ENCODE measurements at regions of chr1 and their contacts with region 1.

Region 1: GRCh38 chr1:61202854-61203598 is 120.7 kb downstream of the NFIA start:
- DNase-seq: no peak
- H3K4me3 Mint-ChIP-seq: no peak overlapping the region
- H3K27ac Mint-ChIP-seq: no peak overlapping the region
- H3K4me1 Mint-ChIP-seq: no peaks in the 10 kb centered on the region
- H3K27me3 Mint-ChIP-seq: peaks cover 17% of the 10 kb centered on the region

Region 2: DNA sequence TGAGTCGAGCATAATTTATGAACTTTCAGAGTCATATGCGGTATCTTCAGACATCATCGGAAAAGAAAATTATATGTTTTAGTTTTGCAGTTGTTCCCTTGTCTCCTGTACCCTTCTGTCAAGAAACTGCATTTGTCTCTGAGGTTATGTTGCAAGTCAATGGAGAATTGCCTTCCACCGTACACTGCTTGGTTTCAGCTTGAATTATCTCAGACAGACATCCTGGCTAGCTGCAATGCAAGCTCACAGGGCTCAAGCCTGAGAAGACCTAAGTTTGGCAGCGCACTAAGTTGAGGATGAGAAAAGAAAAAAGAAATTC is 35.3 kb after region 1 on chr1:
- intact Hi-C with region 1: no loop called
- DNase-seq: no peak
- H3K4me3 Mint-ChIP-seq: no peak overlapping the region
- H3K27ac Mint-ChIP-seq: no peak overlapping the region
- H3K4me1 Mint-ChIP-seq: no peaks in the 10 kb centered on the region
- H3K27me3 Mint-ChIP-seq: peaks cover 5% of the 10 kb centered on the region

Region 3: GRCh38 chr1:61352845-61353435 is 149.9 kb after region 1 on chr1:
- intact Hi-C with region 1: loop called (anchors 5 kb)
- DNase-seq: no peak
- H3K4me3 Mint-ChIP-seq: no peak overlapping the region
- H3K27ac Mint-ChIP-seq: no peak overlapping the region
- H3K4me1 Mint-ChIP-seq: no peaks in the 10 kb centered on the region
- H3K27me3 Mint-ChIP-seq: peaks cover 9% of the 10 kb centered on the region

Region 4: DNA sequence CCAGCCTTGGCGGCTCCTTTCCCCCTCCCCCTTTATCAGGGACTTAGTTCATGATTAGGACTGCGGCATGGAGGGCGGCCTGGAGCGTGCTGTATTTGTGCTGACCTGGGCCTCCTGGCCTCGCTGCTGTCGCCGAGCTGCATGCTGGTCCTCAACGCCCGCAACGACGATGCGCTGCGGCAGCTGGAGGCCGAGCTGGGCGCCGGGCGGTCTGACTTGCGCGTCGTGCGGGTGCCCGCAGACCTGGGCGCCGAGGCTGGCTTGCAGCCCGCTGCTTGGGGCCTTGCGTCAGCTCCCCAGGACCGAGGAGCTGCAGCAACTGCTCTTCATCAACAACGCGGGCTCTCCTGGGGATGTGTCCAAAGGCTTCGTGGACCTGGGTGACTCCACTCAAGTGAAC is 451.1 kb after region 1 on chr1:
- intact Hi-C with region 1: no loop called
- DNase-seq: no peak
- H3K4me3 Mint-ChIP-seq: no peak overlapping the region
- H3K27ac Mint-ChIP-seq: no peak overlapping the region
- H3K4me1 Mint-ChIP-seq: no peaks in the 10 kb centered on the region
- H3K27me3 Mint-ChIP-seq: no peaks in the 10 kb centered on the region